ENCODE measurements at regions of chr5 and their contacts with region 1.

Region 1: DNA sequence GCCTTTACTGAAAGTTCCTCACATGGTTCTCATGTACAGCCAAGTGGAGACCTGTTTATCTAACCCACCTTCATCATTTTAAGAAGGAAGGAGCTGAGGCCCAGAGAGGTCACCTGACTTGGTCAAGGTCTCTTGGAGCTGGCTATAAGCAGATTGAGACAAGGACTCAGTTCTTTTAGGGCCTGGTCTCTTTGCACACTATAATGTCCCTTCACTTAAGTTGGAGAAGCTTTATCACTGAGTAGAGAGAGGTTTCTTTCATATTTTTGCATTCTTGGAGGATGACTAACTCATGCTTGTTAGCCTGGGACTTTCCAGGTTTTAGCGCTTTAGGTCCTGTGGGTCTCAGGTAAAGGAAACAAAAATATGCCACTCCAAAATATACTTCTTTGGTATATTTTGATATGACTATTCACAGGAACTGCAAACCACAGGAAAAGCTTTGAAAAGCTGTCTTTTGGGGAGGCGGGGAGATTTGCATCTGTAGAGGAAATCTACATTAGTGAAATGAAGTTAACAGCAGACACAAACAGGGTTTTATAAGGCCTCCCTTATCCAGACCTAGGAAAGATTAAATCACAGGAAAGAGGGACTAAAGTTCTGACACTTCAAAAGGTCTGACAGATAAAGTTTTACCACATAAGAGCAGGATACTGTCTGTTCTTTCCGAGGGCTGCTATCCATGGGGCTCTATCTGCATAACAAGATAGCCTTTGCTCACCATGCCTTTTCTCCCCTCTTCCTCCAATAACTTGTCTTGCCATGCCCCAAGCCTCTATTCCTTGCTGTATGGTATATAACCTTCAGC is 95.8 kb upstream of the ANKRD55 start:
- DNase-seq: peak; percentile 72
- H3K4me3 ChIP-seq: no peak overlapping the region
- H3K27ac ChIP-seq: peak overlapping the region; percentile 93
- H3K4me1 ChIP-seq: peaks cover 27% of the 10 kb centered on the region
- H3K27me3 ChIP-seq: no peaks in the 10 kb centered on the region
- CTCF ChIP-seq: no peak
- POLR2A ChIP-seq: no peak

Region 2: DNA sequence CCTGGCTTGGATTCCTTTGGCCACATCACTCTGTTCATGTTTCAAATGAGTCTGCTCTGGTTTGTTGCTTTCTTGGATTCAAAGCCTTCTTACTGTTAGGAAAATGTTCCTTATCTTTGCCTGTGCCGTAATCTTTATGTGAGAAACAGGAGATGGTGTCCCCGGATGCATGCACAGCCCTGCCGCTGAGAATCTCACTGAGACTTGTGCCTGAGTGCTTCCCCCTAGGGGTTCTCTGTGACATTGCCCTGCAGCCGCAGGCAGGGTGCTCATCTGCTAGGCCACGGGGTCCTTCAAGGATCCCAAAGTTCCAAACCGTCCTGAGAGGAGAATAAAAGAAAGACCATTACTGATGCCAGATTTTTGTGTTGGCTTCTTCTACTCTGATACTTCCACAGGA is 14.4 kb before region 1 on chr5:
- CTCF ChIA-PET with region 1: interaction called, 10 read pairs
- POLR2A ChIA-PET with region 1: no interaction called
- dilution Hi-C with region 1: no loop called
- intact Hi-C with region 1: no loop called
- DNase-seq: no peak
- H3K4me3 ChIP-seq: no peak overlapping the region
- H3K27ac ChIP-seq: no peak overlapping the region
- H3K4me1 ChIP-seq: peaks cover 4% of the 10 kb centered on the region
- H3K27me3 ChIP-seq: no peaks in the 10 kb centered on the region
- CTCF ChIP-seq: peak in 1 of 2 donors; percentile 49
- POLR2A ChIP-seq: no peak

Region 3: DNA sequence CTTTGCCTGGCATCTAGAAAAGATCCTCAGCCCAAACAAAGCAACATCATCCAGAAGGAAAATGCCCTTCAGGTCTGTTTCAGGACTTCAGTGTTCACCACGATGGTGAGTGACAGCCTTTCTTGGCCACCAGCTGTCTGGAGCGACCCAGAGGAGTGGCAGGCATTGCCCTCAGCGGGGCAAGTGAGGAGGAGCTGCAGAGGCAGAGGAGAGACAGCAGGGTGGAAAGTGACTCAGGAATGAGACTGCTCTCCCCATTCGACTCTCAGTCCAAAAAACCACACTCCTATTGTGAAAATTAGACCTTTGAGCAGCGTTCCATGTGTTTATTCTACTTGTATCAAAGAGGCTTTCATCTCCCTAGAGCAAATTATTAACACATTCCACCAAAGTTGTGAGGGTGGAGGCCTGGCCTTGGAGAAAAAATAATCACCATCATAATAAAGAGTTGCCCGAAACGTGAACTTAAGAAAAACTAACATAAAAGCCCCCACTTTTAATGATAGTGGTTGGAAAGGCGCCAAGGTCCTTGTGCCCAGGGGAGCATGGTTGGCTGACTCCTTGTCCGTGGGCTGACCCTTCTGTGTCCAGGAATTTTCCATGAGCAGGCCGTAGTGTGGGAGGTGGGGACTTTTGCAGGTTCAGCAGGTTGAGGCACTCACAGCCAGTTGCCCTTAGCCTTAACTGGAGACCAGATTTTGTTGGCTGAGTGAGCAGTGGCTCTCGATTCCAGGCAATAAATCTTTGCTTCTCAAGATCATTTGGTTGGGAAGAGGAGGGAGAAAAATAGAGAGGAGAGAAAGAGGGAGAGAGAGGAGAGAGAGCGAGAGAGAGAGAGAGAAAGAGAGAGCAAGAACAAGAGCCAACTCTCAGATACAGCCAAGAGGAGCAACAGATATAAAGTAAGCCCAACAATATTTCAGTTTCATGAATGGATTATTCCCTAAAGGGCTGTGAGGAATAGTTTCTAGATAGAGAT is 30.0 kb after region 1 on chr5:
- CTCF ChIA-PET with region 1: no interaction called
- POLR2A ChIA-PET with region 1: no interaction called
- dilution Hi-C with region 1: no loop called
- intact Hi-C with region 1: no loop called
- DNase-seq: peak; percentile 18
- H3K4me3 ChIP-seq: no peak overlapping the region
- H3K27ac ChIP-seq: no peak overlapping the region
- H3K4me1 ChIP-seq: peaks cover 4% of the 10 kb centered on the region
- H3K27me3 ChIP-seq: no peaks in the 10 kb centered on the region
- CTCF ChIP-seq: no peak
- POLR2A ChIP-seq: no peak